Activated naive CD4-positive, alpha-beta T cell treated with anti-CD3 and anti-CD28 coated beads for 36 hours (primary cell): ENCODE measurements at regions of chr6 and their contacts with region 1.

Region 1: GRCh38 chr6:22145823-22146677 is 150.8 kb downstream of the PRL start:
- DNase-seq: peak; percentile 5
- H3K4me3 Mint-ChIP-seq: peak overlapping the region; percentile 47
- H3K27ac Mint-ChIP-seq: no peak overlapping the region
- H3K4me1 Mint-ChIP-seq: peaks cover 7% of the 10 kb centered on the region
- H3K27me3 Mint-ChIP-seq: peaks cover 39% of the 10 kb centered on the region

Region 2: GRCh38 chr6:20564269-20564668 is 1581.8 kb before region 1 on chr6:
- CTCF ChIA-PET with region 1: no interaction called
- intact Hi-C with region 1: loop called (anchors 10 kb)
- DNase-seq: no peak
- H3K4me3 Mint-ChIP-seq: no peak overlapping the region
- H3K27ac Mint-ChIP-seq: no peak overlapping the region
- H3K4me1 Mint-ChIP-seq: peaks cover 11% of the 10 kb centered on the region
- H3K27me3 Mint-ChIP-seq: no peaks in the 10 kb centered on the region

Region 3: GRCh38 chr6:21870076-21870730 is 275.8 kb before region 1 on chr6:
- CTCF ChIA-PET with region 1: no interaction called
- intact Hi-C with region 1: no loop called
- DNase-seq: no peak
- H3K4me3 Mint-ChIP-seq: no peak overlapping the region
- H3K27ac Mint-ChIP-seq: no peak overlapping the region
- H3K4me1 Mint-ChIP-seq: no peaks in the 10 kb centered on the region
- H3K27me3 Mint-ChIP-seq: no peaks in the 10 kb centered on the region

Region 4: DNA sequence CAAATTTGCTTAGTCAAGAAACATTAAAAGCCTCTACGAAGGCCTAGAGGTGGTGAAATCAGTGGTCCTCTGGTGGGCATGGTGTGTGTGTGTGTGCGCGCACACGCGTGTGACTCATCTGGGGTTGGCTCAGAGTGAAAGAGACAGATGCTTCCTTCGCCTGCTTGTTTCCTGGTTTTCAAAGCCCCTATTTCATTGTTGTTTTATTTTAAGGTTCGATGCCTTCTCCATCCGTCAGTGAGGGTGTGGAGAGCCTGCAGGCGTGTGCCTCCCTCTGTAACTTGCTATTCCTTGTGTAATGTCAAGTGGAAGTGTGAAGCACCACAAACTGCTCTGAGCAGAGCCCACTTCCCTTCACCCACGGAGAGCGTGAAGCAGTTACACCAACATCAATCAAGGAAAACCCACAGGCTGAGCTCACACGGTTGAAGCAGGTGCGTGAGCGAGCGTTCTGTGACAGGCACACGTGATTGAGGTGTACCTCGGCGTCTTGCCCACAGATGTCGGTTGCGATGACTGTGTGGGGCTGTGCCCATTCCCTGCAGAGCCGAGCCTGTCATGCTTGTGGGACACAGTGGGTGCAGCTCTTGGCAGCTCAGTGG is 83.1 kb before region 1 on chr6:
- CTCF ChIA-PET with region 1: no interaction called
- intact Hi-C with region 1: loop called (anchors 5 kb)
- DNase-seq: peak; percentile 69
- H3K4me3 Mint-ChIP-seq: peak overlapping the region; percentile 61
- H3K27ac Mint-ChIP-seq: peak overlapping the region; percentile 55
- H3K4me1 Mint-ChIP-seq: peaks cover 16% of the 10 kb centered on the region
- H3K27me3 Mint-ChIP-seq: peaks cover 13% of the 10 kb centered on the region